ENCODE measurements at regions of chr1 and their contacts with region 1.

Region 1: DNA sequence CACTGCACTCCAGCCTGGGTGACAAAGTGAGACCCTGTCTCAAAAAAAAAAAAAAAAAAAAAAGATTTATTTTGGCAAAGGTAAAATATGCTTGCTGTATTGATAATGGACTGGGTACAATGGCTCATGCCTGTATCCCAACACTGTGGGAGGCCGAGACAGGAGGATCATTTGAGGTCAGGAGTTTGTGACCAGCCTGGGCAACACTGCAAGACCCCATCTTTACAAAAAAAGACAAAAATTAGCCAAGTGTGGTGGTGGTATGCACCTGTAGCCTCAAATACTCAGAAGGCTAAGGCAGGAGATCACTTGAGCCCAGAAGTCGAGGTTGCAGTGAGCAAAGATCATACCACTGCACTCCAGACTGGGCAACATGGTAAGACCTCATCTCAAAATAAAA is 6.3 kb downstream of the SF3A3 start:
- DNase-seq: peak in 1 of 5 donors; percentile 16
- ATAC-seq: no peak
- H3K4me3 ChIP-seq: no peak overlapping the region
- H3K27ac ChIP-seq: no peak overlapping the region
- H3K4me1 ChIP-seq: peaks cover 0 to 12% (median 5%) of the 10 kb centered on the region in 12 donors
- H3K27me3 ChIP-seq: no peaks in the 10 kb centered on the region
- CTCF ChIP-seq: no peak
- POLR2A ChIP-seq: no peak

Region 2: GRCh38 chr1:38018864-38019343 is 35.4 kb after region 1 on chr1:
- intact Hi-C with region 1: loop called in 1 of 10 experiments (anchors 5 kb)
- DNase-seq: no peak
- ATAC-seq: no peak
- H3K4me3 ChIP-seq: no peak overlapping the region
- H3K27ac ChIP-seq: peak overlapping the region in 1 of 12 donors; percentile 95
- H3K4me1 ChIP-seq: peaks cover 4 to 43% (median 33%) of the 10 kb centered on the region in 12 donors
- H3K27me3 ChIP-seq: no peaks in the 10 kb centered on the region
- CTCF ChIP-seq: peak; percentile 24 to 66 (median 54)
- POLR2A ChIP-seq: no peak